ENCODE measurements at regions of chr11 and their contacts with region 1.

Region 1: DNA sequence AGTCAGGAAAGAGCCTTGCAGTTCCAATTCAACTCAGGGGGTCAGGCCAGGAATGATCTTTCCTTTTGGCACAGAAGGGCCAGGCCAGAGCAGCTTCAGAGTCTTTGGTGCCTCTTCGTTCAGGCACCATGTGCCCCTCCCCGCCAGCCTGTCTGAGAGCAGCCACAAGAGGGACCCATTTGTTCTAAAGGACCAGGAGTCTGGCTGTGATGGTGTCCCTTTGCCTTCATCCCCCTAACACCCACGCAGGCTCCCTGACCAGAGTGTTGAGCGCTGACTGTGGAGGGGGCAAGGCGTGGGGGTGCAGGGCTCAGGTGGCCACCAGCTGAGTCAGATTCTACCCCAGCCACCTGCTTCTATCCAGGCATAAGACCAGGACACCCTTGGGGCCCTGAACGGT is 156.4 kb downstream of the TTC17 start:
- DNase-seq: peak; percentile 23
- ATAC-seq: peak; percentile 95
- H3K4me3 ChIP-seq: no peak overlapping the region
- H3K27ac ChIP-seq: no peak overlapping the region
- H3K4me1 ChIP-seq: no peaks in the 10 kb centered on the region
- H3K27me3 ChIP-seq: peaks cover 0 to 23% of the 10 kb centered on the region in 2 experiments; a peak in 2 of 5 replicates
- CTCF ChIP-seq: peak; percentile 61
- EP300 ChIP-seq: no peak
- POLR2A ChIP-seq: no peak
- RAD21 ChIP-seq: peak; percentile 29; the same call in 1 of the 2 replicates

Region 2: DNA sequence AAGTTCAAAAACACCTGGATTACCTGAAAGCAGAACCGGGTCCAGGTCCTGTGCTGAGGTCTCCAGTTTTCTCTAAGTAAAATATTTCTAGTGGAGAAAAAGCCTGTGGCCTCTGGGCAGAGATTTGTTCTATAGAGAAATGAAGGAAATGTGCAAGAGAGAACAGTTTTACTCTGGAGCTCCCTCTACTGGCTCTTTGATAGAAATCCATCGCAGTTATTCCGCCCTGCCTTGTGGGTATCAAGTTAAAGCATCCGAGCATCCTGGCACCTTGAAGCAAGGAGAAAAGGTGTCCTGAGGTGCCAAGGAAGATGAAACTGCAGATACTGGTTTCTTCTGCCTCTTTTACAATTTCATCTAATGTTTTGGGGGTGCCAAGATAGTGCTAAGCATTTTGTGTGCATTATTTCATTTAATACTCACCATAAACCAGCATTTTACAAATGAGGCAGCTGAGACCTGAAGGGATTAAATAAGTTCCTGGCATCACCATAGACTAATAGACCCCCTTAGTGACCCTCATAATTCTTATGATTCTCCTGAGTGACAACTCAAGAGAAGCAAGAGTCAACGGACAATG is 52.4 kb after region 1 on chr11:
- CTCF ChIA-PET with region 1: interaction called, 5 read pairs
- POLR2A ChIA-PET with region 1: no interaction called
- in situ Hi-C with region 1: no loop called
- intact Hi-C with region 1: loop called (anchors 1 kb)
- DNase-seq: peak; percentile 44
- ATAC-seq: peak; percentile 72
- H3K4me3 ChIP-seq: no peak overlapping the region
- H3K27ac ChIP-seq: no peak overlapping the region
- H3K4me1 ChIP-seq: no peaks in the 10 kb centered on the region
- H3K27me3 ChIP-seq: no peaks in the 10 kb centered on the region; a peak in 1 of 5 replicates
- CTCF ChIP-seq: peak; percentile 66
- EP300 ChIP-seq: no peak
- POLR2A ChIP-seq: no peak
- RAD21 ChIP-seq: no peak

Region 3: GRCh38 chr11:43852057-43852636 is 337.1 kb after region 1 on chr11:
- CTCF ChIA-PET with region 1: no interaction called
- POLR2A ChIA-PET with region 1: no interaction called
- in situ Hi-C with region 1: no loop called
- intact Hi-C with region 1: loop called (anchors 1 kb)
- DNase-seq: peak; percentile 48
- ATAC-seq: peak; percentile 89
- H3K4me3 ChIP-seq: no peak overlapping the region
- H3K27ac ChIP-seq: no peak overlapping the region
- H3K4me1 ChIP-seq: no peaks in the 10 kb centered on the region
- H3K27me3 ChIP-seq: no peaks in the 10 kb centered on the region
- CTCF ChIP-seq: peak; percentile 69
- EP300 ChIP-seq: no peak
- POLR2A ChIP-seq: no peak
- RAD21 ChIP-seq: no peak

Measured in HepG2 (cell line).